ENCODE measurements at regions of chr19 and their contacts with region 1.

Region 1: GRCh38 chr19:2618611-2619010 is 83.9 kb downstream of the GNG7 start:
- DNase-seq: peak; percentile 74
- H3K4me3 Mint-ChIP-seq: peak overlapping the region; percentile 60
- H3K27ac Mint-ChIP-seq: peak overlapping the region; percentile 87
- H3K4me1 Mint-ChIP-seq: peaks cover 66% of the 10 kb centered on the region
- H3K27me3 Mint-ChIP-seq: no peaks in the 10 kb centered on the region

Region 2: DNA sequence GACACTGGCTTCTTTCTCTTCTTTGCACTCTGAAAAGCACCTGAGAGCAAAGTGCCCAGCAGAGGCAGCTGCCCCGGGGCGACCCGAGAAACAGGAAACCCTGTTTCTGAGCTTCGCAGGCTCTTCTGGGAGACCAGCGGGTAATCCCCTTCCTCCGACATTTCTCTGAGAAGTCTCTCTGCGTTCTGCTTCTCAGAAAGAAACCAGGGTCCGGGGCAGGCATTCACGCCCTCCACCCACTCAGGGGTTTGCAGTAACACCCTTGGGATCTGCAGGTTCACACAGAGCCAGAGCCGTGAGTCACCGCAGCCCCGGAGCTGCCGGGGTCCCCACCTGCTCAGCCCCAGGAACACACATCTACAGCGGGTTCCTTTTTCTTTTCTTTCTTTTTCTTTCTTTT is 56.7 kb before region 1 on chr19:
- CTCF ChIA-PET with region 1: interaction called, 4 read pairs
- POLR2A ChIA-PET with region 1: interaction called, 17 read pairs
- DNase-seq: peak; percentile 80
- H3K4me3 Mint-ChIP-seq: peak overlapping the region; percentile 85
- H3K27ac Mint-ChIP-seq: peak overlapping the region; percentile 99
- H3K4me1 Mint-ChIP-seq: peaks cover 55% of the 10 kb centered on the region
- H3K27me3 Mint-ChIP-seq: peaks cover 2% of the 10 kb centered on the region

Region 3: DNA sequence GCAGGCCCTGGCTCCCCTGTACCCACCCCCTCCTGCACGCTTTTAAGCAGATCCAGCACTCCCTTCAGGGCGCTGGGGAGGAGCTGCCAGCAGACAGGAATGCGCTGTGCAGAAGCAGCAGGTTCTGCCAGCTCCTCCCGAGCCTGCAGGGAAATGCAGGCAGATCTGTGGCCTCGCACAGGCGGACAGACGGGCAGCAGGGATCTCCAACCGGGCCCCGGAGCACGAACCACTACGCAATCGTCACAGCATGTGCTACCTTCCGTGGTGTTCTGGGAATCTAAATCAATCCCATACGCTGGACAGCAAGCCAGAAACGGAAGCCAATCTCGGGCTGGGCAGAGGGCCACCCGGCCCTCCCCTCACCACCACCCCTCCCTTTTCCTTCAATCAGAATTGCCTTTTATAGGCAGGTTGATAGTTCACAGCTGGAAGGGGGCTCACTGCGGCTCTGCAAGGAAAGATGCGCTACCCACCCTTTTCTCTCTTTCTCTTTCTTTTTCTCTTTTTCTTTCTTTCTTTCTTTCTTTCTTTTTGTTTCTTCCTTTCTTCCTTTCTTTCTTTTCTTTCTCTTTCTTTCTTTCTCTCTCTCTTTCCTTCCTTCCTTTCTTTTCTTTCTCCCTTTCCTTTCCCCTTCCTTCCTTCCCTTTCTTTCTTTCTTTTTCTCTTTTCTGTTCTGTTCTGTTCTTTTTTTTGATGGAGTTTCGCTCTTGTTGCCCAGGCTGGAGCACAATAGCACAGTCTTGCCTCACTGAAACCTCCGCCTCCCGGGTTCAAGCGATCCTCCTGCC is 16.0 kb before region 1 on chr19:
- CTCF ChIA-PET with region 1: interaction called, 19 read pairs
- POLR2A ChIA-PET with region 1: interaction called, 15 read pairs
- DNase-seq: no peak
- H3K4me3 Mint-ChIP-seq: no peak overlapping the region
- H3K27ac Mint-ChIP-seq: no peak overlapping the region
- H3K4me1 Mint-ChIP-seq: peaks cover 14% of the 10 kb centered on the region
- H3K27me3 Mint-ChIP-seq: peaks cover 8% of the 10 kb centered on the region